Endothelial cell of umbilical vein (primary cell): ENCODE measurements at regions of chr6 and their contacts with region 1.

Region 1: DNA sequence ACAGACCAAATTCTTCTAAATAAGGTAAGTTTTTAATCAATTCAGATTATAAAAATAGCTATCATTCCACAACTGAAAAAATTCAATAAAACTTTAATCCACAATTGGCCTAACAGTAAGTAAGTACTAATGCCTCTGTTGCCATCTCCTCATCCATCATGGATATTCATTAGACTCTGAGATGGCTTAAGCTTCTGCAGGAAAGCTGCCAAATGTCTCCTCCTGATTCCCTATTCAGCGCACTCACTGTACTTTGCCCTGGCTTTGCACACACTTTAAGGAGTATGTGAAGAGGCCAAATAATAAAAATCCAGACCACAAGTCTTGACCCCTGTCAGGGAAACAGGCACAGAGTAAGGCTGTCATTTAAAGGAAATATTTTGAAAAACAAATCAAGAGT is 23.6 kb downstream of the PGM3 start:
- DNase-seq: no peak
- H3K4me3 ChIP-seq: no peak overlapping the region
- H3K27ac ChIP-seq: no peak overlapping the region
- H3K4me1 ChIP-seq: no peaks in the 10 kb centered on the region
- H3K27me3 ChIP-seq: no peaks in the 10 kb centered on the region
- CTCF ChIP-seq: no peak
- POLR2A ChIP-seq: no peak

Region 2: DNA sequence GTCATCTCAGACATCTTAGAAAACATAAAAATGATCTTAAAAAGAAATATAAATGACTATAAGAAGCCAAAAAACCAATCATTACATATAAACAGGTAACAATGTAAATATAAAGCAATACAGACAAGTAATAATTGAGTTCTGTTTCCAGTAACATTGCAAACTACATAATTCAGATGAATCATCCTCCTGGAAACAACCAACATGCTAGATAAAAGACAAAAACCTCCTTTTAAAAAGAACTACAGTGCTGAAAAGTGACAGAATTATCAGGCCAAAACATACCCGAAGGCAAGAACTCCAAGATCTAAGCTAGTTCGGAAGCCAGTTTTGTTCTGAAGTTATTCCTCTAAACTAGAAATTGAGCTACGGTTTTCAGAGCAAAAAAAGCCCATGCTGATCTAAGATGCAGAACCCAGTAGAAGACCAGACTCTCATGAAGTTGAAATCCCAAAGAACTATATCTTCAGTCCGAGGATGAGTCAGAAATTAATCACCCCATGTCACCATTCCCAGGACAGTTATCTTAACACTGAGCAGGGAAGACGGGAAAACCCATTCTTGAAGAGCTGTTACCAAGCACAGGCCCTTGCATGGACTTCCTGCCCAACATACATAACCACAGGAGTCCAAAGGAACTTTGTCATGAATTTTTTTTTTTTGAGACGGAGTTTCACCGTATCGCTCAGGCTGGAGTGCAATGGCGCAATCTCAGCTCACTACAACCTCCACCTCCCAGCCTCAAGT is 13.7 kb after region 1 on chr6:
- CTCF ChIA-PET with region 1: interaction called, 5 read pairs
- POLR2A ChIA-PET with region 1: interaction called, 3 read pairs
- dilution Hi-C with region 1: no loop called
- intact Hi-C with region 1: loop called (anchors 2 kb)
- DNase-seq: no peak
- H3K4me3 ChIP-seq: no peak overlapping the region
- H3K27ac ChIP-seq: no peak overlapping the region
- H3K4me1 ChIP-seq: no peaks in the 10 kb centered on the region
- H3K27me3 ChIP-seq: no peaks in the 10 kb centered on the region
- CTCF ChIP-seq: no peak
- POLR2A ChIP-seq: no peak